ENCODE measurements at regions of chr3 and their contacts with region 1.

Region 1: DNA sequence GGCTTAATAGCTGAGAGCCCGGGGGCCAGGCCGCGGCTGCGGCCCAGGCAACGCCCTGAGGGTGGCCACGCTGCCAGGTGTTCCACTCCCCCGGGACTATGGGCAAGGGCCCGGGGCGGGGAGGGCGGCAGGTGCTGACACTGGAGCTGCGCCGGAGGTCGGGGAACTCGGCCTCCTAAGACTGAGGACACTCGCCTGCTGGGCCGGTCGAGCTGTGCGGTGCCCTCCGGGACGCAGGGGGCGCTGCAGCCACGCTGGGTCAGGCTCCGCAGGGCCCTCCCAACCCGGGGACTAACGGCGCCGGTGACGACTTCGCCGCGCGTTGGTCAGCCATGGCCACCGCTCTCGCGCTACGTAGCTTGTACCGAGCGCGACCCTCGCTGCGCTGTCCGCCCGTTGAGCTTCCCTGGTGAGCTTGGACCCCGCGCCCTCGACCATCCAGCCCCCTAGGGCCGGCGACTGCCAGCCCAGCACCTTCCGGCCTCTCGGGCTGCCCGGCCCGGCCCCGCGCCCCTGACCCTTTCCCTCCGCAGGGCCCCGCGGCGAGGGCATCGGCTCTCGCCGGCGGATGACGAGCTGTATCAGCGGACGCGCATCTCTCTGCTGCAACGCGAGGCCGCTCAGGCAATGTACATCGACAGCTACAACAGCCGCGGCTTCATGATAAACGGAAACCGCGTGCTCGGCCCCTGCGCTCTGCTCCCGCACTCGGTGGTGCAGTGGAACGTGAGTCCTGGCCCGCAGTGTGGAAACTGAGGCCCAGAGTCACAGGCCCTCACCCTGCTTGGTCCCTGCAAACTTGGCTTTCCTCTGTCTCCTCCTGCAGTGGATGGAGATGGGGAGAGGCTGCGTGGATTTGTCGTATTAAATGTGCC is at the start of gene NDUFAF3:
- DNase-seq: peak; percentile 94
- ATAC-seq: peak; percentile 67
- H3K4me3 Mint-ChIP-seq: peak within 1 kb of the TSS; percentile 94
- H3K27ac Mint-ChIP-seq: peak within 1 kb of the TSS; percentile 97
- H3K4me1 Mint-ChIP-seq: peaks cover 66% of the 10 kb centered on the region
- H3K27me3 Mint-ChIP-seq: no peaks in the 10 kb centered on the region
- CTCF ChIP-seq: peak; percentile 39
- total RNA-seq, gene NDUFAF3: 86.3 and 86.5 TPM in 2 replicates

Region 2: GRCh38 chr3:48918388-48919214 is 103.4 kb before region 1 on chr3 and contains the start of gene ARIH2:
- CTCF ChIA-PET with region 1: no interaction called
- POLR2A ChIA-PET with region 1: interaction called, 21 read pairs
- intact Hi-C with region 1: loop called (anchors 2 kb)
- DNase-seq: peak; percentile 91
- ATAC-seq: peak; percentile 85
- H3K4me3 Mint-ChIP-seq: peak within 1 kb of the TSS; percentile 99
- H3K27ac Mint-ChIP-seq: peak within 1 kb of the TSS; percentile 98
- H3K4me1 Mint-ChIP-seq: peaks cover 32% of the 10 kb centered on the region
- H3K27me3 Mint-ChIP-seq: no peaks in the 10 kb centered on the region
- CTCF ChIP-seq: no peak
- total RNA-seq, gene ARIH2: 96.6 and 112 TPM in 2 replicates

Region 3: GRCh38 chr3:49035281-49035680 is 13.2 kb after region 1 on chr3:
- CTCF ChIA-PET with region 1: no interaction called
- POLR2A ChIA-PET with region 1: interaction called, 13 read pairs
- intact Hi-C with region 1: no loop called
- DNase-seq: no peak
- ATAC-seq: no peak
- H3K4me3 Mint-ChIP-seq: no peak overlapping the region
- H3K27ac Mint-ChIP-seq: no peak overlapping the region
- H3K4me1 Mint-ChIP-seq: peaks cover 6% of the 10 kb centered on the region
- H3K27me3 Mint-ChIP-seq: no peaks in the 10 kb centered on the region
- CTCF ChIP-seq: no peak

Region 4: DNA sequence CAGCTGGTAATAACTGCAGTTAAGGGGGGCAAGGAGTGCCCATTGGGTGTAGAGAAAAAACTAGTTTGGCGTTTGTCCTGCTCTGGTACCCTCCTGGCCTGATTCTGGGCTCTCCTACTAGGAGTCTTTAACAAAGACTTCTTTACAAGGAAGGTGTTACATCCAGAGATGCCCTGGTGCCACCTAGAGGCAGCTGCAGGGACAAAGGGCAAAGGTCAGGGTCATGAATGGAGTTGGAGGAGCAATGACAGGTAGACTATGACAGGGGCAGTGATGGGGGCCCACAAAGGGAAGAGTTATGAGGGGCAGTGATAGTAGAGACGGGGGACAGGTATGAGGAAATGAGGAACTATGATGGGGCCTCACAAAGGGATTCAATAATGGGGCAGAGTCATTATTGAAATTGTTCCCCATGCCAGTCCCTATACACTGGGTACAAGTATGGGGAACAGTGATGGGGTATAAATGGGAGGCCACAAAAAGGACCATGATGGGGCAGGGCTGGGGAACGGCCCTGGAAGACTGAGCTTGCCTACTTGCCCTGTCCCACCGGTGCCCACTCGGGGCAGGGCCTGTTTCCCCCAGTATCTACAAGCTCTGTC is 136.2 kb after region 1 on chr3:
- CTCF ChIA-PET with region 1: no interaction called
- POLR2A ChIA-PET with region 1: interaction called, 3 read pairs
- intact Hi-C with region 1: loop called (anchors 1 kb)
- DNase-seq: peak; percentile 26
- ATAC-seq: peak; percentile 84
- H3K4me3 Mint-ChIP-seq: no peak overlapping the region
- H3K27ac Mint-ChIP-seq: no peak overlapping the region
- H3K4me1 Mint-ChIP-seq: peaks cover 2% of the 10 kb centered on the region
- H3K27me3 Mint-ChIP-seq: no peaks in the 10 kb centered on the region
- CTCF ChIP-seq: no peak

Region 5: GRCh38 chr3:50192689-50193141 is 1170.7 kb after region 1 on chr3:
- CTCF ChIA-PET with region 1: no interaction called
- POLR2A ChIA-PET with region 1: no interaction called
- intact Hi-C with region 1: loop called (anchors 5 kb)
- DNase-seq: peak; percentile 82
- ATAC-seq: peak; percentile 72
- H3K4me3 Mint-ChIP-seq: no peak overlapping the region
- H3K27ac Mint-ChIP-seq: no peak overlapping the region
- H3K4me1 Mint-ChIP-seq: peaks cover 18% of the 10 kb centered on the region
- H3K27me3 Mint-ChIP-seq: peaks cover 11% of the 10 kb centered on the region
- CTCF ChIP-seq: no peak